Left colon (tissue), 2 donors: ENCODE measurements at regions of chr2 and their contacts with region 1.

Region 1: GRCh38 chr2:26605195-26605998 is 35.8 kb downstream of the CIB4 start:
- DNase-seq: peak in 1 of 2 donors; percentile 27
- ATAC-seq: peak; percentile 59

Region 2: GRCh38 chr2:26745609-26746327 is 140.4 kb after region 1 on chr2:
- intact Hi-C with region 1: loop called (anchors 1 to 5 kb)
- DNase-seq: peak; percentile 58 to 90
- ATAC-seq: peak; percentile 85